ENCODE measurements at regions of chr11 and their contacts with region 1.

Region 1: GRCh38 chr11:66022401-66023185 is 3.7 kb downstream of the CATSPER1 start:
- DNase-seq: peak; percentile 82
- ATAC-seq: peak; percentile 98
- H3K4me3 Mint-ChIP-seq: peak overlapping the region; percentile 24
- H3K27ac Mint-ChIP-seq: no peak overlapping the region
- H3K4me1 Mint-ChIP-seq: peaks cover 4% of the 10 kb centered on the region
- H3K27me3 Mint-ChIP-seq: peaks cover 8% of the 10 kb centered on the region
- CTCF ChIP-seq: peak; percentile 25

Region 2: DNA sequence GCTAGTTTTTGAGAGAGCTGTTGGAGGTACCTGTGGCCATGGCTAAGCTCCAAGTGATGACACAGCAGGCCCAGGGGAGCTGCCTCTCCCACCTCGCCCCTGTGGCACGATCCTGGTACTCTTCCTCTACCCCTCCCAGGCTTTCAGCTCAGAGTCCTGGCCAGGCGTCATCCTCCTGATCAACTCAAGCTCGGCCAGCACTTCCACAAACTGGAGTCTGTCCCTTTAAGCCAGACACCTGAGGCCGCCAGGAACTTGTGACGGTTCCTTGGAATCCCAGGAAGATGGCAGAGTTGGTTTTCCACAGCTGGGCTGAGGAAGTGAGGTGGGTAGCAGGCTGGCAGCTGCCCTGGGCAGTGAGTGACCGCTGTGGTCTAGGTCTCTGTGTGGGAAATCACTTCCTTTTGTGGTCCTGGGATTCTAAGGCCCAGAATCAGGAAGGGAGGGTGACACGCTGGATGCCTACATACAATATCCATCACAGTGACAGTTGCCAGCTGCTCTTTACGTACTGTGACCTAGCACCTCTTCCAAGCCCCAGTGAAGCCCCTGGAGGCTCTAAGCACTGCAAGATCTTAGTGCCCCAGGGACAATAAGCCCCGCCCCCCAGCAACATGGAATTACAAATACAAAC is 14.0 kb before region 1 on chr11:
- CTCF ChIA-PET with region 1: interaction called, 13 read pairs
- POLR2A ChIA-PET with region 1: interaction called, 3 read pairs
- intact Hi-C with region 1: loop called (anchors 1 kb)
- DNase-seq: no peak
- ATAC-seq: no peak
- H3K4me3 Mint-ChIP-seq: no peak overlapping the region
- H3K27ac Mint-ChIP-seq: no peak overlapping the region
- H3K4me1 Mint-ChIP-seq: peaks cover under 1% of the 10 kb centered on the region
- H3K27me3 Mint-ChIP-seq: peaks cover 10% of the 10 kb centered on the region
- CTCF ChIP-seq: no peak

Region 3: DNA sequence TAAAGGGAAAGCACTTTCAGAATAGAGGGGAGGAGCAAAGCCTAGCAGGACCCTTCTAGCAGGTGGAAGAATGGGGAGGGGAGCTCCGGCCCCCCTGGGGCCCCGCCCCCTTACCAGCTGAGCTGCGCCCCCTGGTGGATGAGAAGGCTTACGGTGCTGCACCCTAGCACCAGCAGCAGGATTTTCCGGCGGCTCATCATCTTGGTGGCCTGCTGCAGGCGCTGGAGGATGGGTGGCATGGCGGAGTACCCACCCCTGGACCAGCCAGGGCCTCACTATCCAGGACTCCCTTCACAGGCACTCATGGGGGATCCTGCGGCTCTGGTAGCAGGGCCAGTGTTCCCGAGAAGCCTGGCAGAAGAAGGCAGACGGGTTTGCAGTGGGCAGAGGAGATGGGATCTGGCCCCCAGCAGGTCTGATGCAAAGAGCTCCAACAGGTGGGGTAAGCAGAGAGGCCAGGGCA is 22.6 kb after region 1 on chr11:
- CTCF ChIA-PET with region 1: interaction called, 14 read pairs
- POLR2A ChIA-PET with region 1: no interaction called
- intact Hi-C with region 1: no loop called
- DNase-seq: peak; percentile 79
- ATAC-seq: peak; percentile 99
- H3K4me3 Mint-ChIP-seq: no peak overlapping the region
- H3K27ac Mint-ChIP-seq: no peak overlapping the region
- H3K4me1 Mint-ChIP-seq: peaks cover 9% of the 10 kb centered on the region
- H3K27me3 Mint-ChIP-seq: peaks cover 8% of the 10 kb centered on the region
- CTCF ChIP-seq: peak; percentile 63

Region 4: GRCh38 chr11:66228521-66228920 is 205.9 kb after region 1 on chr11:
- CTCF ChIA-PET with region 1: no interaction called
- POLR2A ChIA-PET with region 1: no interaction called
- intact Hi-C with region 1: no loop called
- DNase-seq: no peak
- ATAC-seq: no peak
- H3K4me3 Mint-ChIP-seq: no peak overlapping the region
- H3K27ac Mint-ChIP-seq: no peak overlapping the region
- H3K4me1 Mint-ChIP-seq: no peaks in the 10 kb centered on the region
- H3K27me3 Mint-ChIP-seq: no peaks in the 10 kb centered on the region
- CTCF ChIP-seq: no peak

Region 5: DNA sequence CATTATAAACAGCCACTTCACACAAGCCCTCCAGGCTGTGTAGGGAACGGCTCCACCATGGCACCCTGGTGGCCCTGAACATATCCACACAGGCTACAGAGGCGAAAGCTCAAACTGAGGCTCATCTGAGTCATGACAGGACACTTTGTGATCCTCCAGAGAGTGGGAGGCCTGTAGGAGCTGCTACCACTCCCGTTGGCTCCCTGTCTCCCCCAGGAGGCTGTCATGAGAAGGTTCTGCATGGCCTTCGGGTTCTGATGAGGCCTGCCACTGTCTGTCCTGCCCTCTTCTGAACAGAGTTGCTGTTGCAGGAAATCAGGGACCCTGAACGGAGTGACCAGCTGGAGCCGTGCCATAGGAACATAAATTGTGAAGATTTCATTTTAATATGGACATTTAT is 1675.7 kb after region 1 on chr11:
- CTCF ChIA-PET with region 1: no interaction called
- POLR2A ChIA-PET with region 1: no interaction called
- intact Hi-C with region 1: no loop called
- DNase-seq: no peak
- ATAC-seq: no peak
- H3K4me3 Mint-ChIP-seq: no peak overlapping the region
- H3K27ac Mint-ChIP-seq: no peak overlapping the region
- H3K4me1 Mint-ChIP-seq: no peaks in the 10 kb centered on the region
- H3K27me3 Mint-ChIP-seq: peaks cover 16% of the 10 kb centered on the region
- CTCF ChIP-seq: no peak